ENCODE measurements at regions of chr21 and their contacts with region 1.

Region 1: DNA sequence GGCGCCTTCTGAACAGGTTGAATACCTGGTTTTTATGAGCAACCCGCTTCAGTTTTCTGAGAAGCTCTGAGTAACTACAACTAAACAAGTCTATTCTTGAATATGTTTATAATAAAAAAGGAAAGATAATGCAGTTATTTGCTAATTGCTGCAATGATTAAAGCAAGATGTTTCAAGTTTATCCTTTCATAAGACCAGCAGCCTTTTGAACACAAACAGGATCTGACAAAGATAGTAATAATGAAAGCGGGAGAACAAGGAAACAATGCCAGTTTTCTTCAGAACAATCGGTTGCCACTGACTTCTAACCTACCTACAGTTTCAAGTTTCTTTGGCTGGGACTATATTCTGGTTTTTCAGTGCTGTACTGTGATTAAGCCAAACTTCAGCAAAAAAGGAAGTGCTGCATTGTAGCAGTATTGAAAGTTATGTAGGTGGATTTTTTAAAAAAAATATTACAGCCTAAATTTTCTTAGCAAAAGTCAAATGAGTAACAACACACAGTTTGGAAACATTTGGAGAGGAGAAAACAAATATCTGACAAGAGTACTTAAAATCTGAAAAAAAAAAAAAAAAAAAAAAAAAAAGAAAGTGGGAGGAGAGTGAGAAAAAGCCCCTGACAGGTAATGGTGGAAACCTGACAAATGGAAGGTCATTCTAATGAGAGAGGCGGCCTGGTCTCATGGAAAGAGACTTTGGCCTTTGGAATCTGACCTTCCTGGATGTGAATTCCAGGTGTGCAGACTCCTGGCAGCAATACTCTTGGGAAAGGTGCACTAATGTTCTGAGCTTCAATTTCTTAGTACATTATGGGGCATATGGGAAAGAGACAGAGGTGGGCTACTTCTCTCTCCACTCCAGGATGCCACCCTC is 11.4 kb downstream of the KCNJ15 start:
- DNase-seq: no peak
- H3K4me3 Mint-ChIP-seq: no peak overlapping the region
- H3K27ac Mint-ChIP-seq: no peak overlapping the region
- H3K4me1 Mint-ChIP-seq: peaks cover 14% of the 10 kb centered on the region
- H3K27me3 Mint-ChIP-seq: no peaks in the 10 kb centered on the region
- CTCF ChIP-seq: no peak

Region 2: DNA sequence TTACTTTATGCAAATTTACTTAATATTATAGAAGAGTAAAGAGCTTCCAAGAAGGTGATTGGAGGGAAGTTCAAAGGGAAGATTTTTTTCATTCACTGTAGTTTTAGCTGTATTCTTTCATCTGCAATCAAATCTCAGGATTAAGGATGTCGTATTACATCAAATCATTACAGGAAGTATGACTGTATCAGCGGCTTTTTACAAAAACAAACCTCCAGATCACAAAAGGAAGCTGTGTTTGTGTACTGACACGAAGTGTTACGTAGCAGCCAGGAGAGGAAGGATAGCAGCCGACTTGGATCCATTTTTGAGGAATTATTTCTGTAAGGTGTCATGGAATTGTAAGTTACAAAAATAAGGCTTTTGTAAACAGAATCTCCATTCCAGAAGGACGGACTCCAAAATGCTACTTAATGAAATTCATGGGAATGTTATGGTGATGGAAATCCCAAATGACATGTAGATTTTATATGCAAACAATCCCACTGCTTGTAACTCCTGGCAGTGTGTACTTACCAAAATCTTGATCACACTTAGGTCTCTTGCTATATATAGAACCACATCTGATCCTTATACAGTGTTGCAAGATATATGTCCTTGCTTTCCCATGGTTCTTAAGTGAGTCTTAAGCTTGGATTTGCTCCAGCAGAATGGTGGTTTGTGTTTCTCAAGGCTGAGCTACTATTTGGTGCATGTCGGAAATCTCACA is 38.4 kb after region 1 on chr21:
- CTCF ChIA-PET with region 1: no interaction called
- intact Hi-C with region 1: no loop called
- DNase-seq: no peak
- H3K4me3 Mint-ChIP-seq: peak overlapping the region; percentile 10
- H3K27ac Mint-ChIP-seq: peak overlapping the region; percentile 53
- H3K4me1 Mint-ChIP-seq: peaks cover 15% of the 10 kb centered on the region
- H3K27me3 Mint-ChIP-seq: no peaks in the 10 kb centered on the region
- CTCF ChIP-seq: no peak

Region 3: GRCh38 chr21:38334866-38335265 is 66.6 kb after region 1 on chr21:
- CTCF ChIA-PET with region 1: interaction called, 10 read pairs
- intact Hi-C with region 1: no loop called
- DNase-seq: no peak
- H3K4me3 Mint-ChIP-seq: no peak overlapping the region
- H3K27ac Mint-ChIP-seq: no peak overlapping the region
- H3K4me1 Mint-ChIP-seq: no peaks in the 10 kb centered on the region
- H3K27me3 Mint-ChIP-seq: no peaks in the 10 kb centered on the region
- CTCF ChIP-seq: no peak

Region 4: GRCh38 chr21:40057331-40057730 is 1789.1 kb after region 1 on chr21:
- CTCF ChIA-PET with region 1: no interaction called
- intact Hi-C with region 1: no loop called
- DNase-seq: no peak
- H3K4me3 Mint-ChIP-seq: no peak overlapping the region
- H3K27ac Mint-ChIP-seq: no peak overlapping the region
- H3K4me1 Mint-ChIP-seq: no peaks in the 10 kb centered on the region
- H3K27me3 Mint-ChIP-seq: no peaks in the 10 kb centered on the region
- CTCF ChIP-seq: no peak

Measured in Calu3 (cell line).